Activated naive CD4-positive, alpha-beta T cell treated with anti-CD3 and anti-CD28 coated beads for 36 hours (primary cell): ENCODE measurements at regions of chr5 and their contacts with region 1.

Region 1: DNA sequence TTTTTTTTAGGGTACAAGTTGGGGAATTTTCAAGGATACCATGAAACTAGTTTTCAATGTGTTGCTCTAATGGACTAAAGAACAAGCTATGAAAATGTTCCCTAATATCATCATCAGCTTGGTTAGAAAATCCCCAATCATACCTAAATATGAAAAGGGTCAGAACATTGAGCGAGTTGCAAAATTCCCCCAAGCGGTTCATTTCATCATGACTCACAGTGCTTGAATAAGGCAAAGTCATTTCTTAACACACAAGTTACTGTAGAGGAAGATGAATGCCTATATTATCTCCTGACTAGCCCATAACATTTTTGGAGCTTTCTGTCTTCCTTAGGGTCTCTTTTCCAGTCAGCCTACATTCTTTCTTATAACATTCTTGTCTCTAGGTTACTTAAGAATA is 62.7 kb downstream of the ST8SIA4 start:
- DNase-seq: peak; percentile 69
- H3K4me3 Mint-ChIP-seq: no peak overlapping the region
- H3K27ac Mint-ChIP-seq: peak overlapping the region; percentile 77
- H3K4me1 Mint-ChIP-seq: peaks cover 62% of the 10 kb centered on the region
- H3K27me3 Mint-ChIP-seq: no peaks in the 10 kb centered on the region

Region 2: GRCh38 chr5:100406640-100407039 is 433.7 kb before region 1 on chr5:
- CTCF ChIA-PET with region 1: no interaction called
- intact Hi-C with region 1: no loop called
- DNase-seq: no peak
- H3K4me3 Mint-ChIP-seq: no peak overlapping the region
- H3K27ac Mint-ChIP-seq: no peak overlapping the region
- H3K4me1 Mint-ChIP-seq: no peaks in the 10 kb centered on the region
- H3K27me3 Mint-ChIP-seq: peaks cover 2% of the 10 kb centered on the region

Region 3: GRCh38 chr5:100535060-100536005 is 305.1 kb before region 1 on chr5 and contains the start of gene FAM174A:
- CTCF ChIA-PET with region 1: no interaction called
- intact Hi-C with region 1: loop called (anchors 5 kb)
- DNase-seq: peak; percentile 96
- H3K4me3 Mint-ChIP-seq: peak within 1 kb of the TSS; percentile 94
- H3K27ac Mint-ChIP-seq: peak within 1 kb of the TSS; percentile 75
- H3K4me1 Mint-ChIP-seq: peaks cover 16% of the 10 kb centered on the region
- H3K27me3 Mint-ChIP-seq: no peaks in the 10 kb centered on the region
- total RNA-seq, gene FAM174A: 3.1 to 3.9 TPM

Region 4: GRCh38 chr5:100827481-100827889 is 12.9 kb before region 1 on chr5:
- CTCF ChIA-PET with region 1: interaction called, 6 read pairs
- intact Hi-C with region 1: loop called (anchors 1 kb)
- DNase-seq: peak; percentile 12
- H3K4me3 Mint-ChIP-seq: no peak overlapping the region
- H3K27ac Mint-ChIP-seq: no peak overlapping the region
- H3K4me1 Mint-ChIP-seq: peaks cover 33% of the 10 kb centered on the region
- H3K27me3 Mint-ChIP-seq: no peaks in the 10 kb centered on the region

Region 5: DNA sequence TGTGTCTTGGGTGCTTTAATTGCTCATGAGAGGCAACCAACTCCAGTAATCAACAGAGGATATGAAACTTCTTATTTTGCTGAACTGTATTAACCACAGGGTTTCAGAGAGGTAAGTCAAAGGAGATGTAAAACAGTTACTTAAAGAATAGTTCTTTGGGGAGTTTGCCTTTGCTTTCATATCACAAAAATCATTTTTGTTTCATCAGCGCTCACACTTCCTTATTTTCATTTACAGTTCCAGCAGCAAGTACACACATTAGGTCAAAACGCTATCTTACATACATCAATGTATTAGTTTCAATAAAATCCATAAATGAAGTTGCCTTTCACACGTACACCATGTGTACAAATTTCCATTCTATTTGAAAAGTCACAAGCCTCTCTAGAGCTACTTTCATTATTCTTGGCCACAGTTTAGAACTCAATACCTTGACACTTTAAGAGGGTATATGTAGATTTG is 12.6 kb after region 1 on chr5:
- CTCF ChIA-PET with region 1: interaction called, 3 read pairs
- intact Hi-C with region 1: loop called (anchors 1 kb)
- DNase-seq: no peak
- H3K4me3 Mint-ChIP-seq: peak overlapping the region; percentile 51
- H3K27ac Mint-ChIP-seq: peak overlapping the region; percentile 73
- H3K4me1 Mint-ChIP-seq: peaks cover 34% of the 10 kb centered on the region
- H3K27me3 Mint-ChIP-seq: no peaks in the 10 kb centered on the region

Region 6: GRCh38 chr5:100860407-100860806 is 20.0 kb after region 1 on chr5:
- CTCF ChIA-PET with region 1: interaction called, 4 read pairs
- intact Hi-C with region 1: loop called (anchors 1 kb)
- DNase-seq: no peak
- H3K4me3 Mint-ChIP-seq: no peak overlapping the region
- H3K27ac Mint-ChIP-seq: no peak overlapping the region
- H3K4me1 Mint-ChIP-seq: peaks cover 43% of the 10 kb centered on the region
- H3K27me3 Mint-ChIP-seq: no peaks in the 10 kb centered on the region

Region 7: DNA sequence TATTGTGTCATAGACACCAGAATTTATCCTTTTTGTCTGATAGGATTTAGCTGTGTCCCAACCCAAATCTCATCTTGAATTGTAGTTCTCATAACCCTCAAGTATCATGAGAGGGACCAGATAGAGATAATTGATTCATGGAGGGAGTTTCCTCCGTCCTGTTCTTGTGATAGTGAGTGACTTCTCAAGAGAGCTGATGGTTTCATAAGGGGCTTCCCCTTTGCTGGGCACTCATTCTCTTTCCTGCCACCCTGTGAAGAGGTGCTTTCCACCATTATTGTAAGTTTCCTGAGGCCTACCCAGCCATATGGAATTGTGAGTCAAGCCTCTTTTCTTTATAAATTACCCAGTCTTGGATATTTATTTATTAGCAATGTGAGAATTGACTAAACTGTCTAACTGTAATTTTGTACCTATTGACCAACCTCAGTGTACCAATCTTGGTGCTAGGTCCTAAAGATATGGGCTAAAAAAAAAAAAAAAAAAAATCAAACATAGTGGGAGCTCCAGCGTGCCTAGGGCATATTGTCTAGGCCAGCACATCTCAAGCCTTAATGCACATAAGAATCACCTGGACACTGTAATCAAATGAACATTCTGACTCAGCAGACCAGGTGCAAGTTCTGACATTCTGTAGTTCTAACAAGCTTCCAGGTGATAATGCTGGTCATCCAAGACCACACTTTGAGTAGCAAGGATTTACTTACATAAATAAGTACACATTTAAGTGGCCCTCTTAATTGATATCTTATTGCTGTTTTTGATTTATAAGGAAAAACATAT is 32.2 kb after region 1 on chr5:
- CTCF ChIA-PET with region 1: no interaction called
- intact Hi-C with region 1: loop called (anchors 1 kb)
- DNase-seq: peak; percentile 65
- H3K4me3 Mint-ChIP-seq: no peak overlapping the region
- H3K27ac Mint-ChIP-seq: peak overlapping the region; percentile 64
- H3K4me1 Mint-ChIP-seq: peaks cover 43% of the 10 kb centered on the region
- H3K27me3 Mint-ChIP-seq: no peaks in the 10 kb centered on the region

Region 8: DNA sequence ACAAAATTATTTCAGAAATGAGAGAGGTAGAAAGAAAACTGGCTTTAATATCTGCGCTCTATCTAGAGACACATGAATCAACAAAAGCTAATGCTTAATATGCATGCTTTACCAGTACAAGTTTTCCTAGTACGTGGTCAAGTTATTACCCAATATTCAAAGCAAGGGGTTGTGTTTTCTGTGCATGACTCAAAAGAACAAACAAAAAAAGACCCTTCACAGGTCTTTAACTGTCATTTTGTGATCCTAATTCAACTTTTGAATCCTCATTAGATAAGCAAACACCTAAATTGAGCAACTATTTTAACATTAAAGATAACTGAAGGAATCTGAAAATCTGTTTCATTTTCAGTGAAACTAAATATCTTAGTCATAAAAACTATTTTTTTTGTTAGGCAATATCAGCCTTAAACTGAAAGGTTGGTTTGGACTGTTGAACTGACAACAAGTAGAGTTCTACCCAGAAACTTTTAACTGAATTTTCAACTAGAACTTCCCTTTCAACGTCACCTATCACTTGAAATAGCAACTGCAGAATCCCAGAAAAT is 50.2 kb after region 1 on chr5:
- CTCF ChIA-PET with region 1: no interaction called
- intact Hi-C with region 1: loop called (anchors 1 kb)
- DNase-seq: no peak
- H3K4me3 Mint-ChIP-seq: peak overlapping the region; percentile 52
- H3K27ac Mint-ChIP-seq: peak overlapping the region; percentile 70
- H3K4me1 Mint-ChIP-seq: peaks cover 53% of the 10 kb centered on the region
- H3K27me3 Mint-ChIP-seq: no peaks in the 10 kb centered on the region